A673 (cell line): ENCODE measurements at regions of chr7 and their contacts with region 1.

Region 1: DNA sequence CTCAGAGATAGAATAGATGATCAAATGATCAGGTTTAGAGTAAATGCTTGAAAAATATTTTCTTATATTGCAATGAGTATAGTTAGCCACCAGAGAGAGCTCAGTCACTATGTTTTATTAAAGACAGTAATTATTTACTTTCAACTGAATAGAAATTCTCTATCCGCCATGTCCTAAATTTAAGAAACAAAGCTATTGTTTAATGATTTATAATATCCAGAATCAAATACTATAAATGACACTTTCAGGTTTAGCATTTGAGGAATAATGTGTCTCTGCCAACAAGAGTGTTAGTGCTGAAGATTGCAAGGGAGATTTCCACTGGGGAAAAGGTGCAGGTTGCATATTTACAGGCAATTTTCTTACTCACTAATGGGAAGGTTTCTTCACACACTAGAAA is 184.7 kb downstream of the DGKB start:
- DNase-seq: peak; percentile 27
- H3K4me3 ChIP-seq: no peak overlapping the region
- H3K27ac ChIP-seq: no peak overlapping the region
- H3K4me1 ChIP-seq: no peaks in the 10 kb centered on the region
- H3K27me3 ChIP-seq: peaks cover 21% of the 10 kb centered on the region
- CTCF ChIP-seq: peak; percentile 70

Region 2: GRCh38 chr7:14598978-14599377 is 118.8 kb before region 1 on chr7:
- CTCF ChIA-PET with region 1: no interaction called
- POLR2A ChIA-PET with region 1: no interaction called
- intact Hi-C with region 1: no loop called
- DNase-seq: no peak
- H3K4me3 ChIP-seq: no peak overlapping the region
- H3K27ac ChIP-seq: no peak overlapping the region
- H3K4me1 ChIP-seq: no peaks in the 10 kb centered on the region
- H3K27me3 ChIP-seq: no peaks in the 10 kb centered on the region
- CTCF ChIP-seq: no peak

Region 3: DNA sequence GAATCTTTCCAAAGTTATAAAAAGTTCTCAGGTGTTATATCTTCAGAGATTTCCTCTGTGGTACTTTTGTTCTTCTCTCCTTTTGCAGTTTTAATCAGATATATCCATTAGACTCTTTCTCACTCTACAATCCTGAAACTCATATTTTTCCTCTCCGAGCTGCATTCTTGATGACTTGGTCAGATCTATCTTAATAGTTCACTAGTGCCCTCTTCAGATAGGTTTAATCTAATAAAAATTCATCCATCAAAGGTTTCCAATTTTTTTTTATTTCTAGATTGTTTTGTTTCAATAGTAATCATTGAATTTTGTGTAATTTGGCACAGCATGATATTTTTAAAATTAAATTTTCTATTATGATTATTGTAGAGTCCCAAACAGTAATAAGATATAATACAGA is 206.6 kb after region 1 on chr7:
- CTCF ChIA-PET with region 1: interaction called, 8 read pairs
- POLR2A ChIA-PET with region 1: no interaction called
- intact Hi-C with region 1: loop called (anchors 2 kb)
- DNase-seq: peak; percentile 14
- H3K4me3 ChIP-seq: no peak overlapping the region
- H3K27ac ChIP-seq: no peak overlapping the region
- H3K4me1 ChIP-seq: no peaks in the 10 kb centered on the region
- H3K27me3 ChIP-seq: peaks cover 4% of the 10 kb centered on the region
- CTCF ChIP-seq: no peak; the same call in 1 of the 2 replicates

Region 4: DNA sequence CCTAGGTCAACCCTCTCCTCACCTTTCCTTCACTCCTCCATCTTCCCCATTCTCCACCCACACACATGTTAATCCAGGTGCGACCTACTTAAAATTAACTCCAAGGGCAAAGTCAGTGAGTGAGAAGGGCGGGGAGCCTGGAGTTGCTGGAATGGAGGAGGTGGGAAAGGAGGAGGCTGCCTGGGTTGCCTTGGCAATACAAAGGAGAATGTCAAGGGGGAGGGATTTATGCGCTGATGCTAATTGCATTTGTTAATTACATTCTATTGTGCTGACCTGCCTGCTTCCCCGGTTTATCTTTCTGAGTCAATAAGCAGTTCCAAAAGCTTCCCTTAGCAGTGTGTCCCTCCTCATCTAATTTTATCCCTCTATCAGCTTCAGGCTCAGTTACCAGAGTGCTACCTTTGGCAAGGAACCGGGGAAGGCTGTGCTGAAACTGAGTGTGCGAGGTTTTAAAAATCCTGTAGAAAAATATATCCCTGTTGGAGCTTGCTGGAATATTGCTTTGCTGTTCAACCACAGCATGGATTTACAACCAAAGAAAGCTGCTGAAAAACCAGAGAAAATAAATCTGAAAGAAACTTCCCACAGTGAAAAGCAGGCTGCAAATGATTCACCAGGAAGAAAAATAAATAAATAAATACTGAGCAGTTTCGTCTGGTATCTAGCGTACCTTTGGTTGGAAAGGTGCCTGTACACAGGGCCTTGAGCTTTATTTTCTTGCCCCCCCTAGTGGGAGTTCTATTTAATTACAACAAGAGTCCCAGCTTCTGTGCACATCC is 297.9 kb after region 1 on chr7:
- CTCF ChIA-PET with region 1: interaction called, 17 read pairs
- POLR2A ChIA-PET with region 1: no interaction called
- intact Hi-C with region 1: loop called (anchors 2 kb)
- DNase-seq: peak; percentile 75
- H3K4me3 ChIP-seq: no peak overlapping the region
- H3K27ac ChIP-seq: no peak overlapping the region
- H3K4me1 ChIP-seq: no peaks in the 10 kb centered on the region
- H3K27me3 ChIP-seq: no peaks in the 10 kb centered on the region
- CTCF ChIP-seq: peak; percentile 74

Region 5: DNA sequence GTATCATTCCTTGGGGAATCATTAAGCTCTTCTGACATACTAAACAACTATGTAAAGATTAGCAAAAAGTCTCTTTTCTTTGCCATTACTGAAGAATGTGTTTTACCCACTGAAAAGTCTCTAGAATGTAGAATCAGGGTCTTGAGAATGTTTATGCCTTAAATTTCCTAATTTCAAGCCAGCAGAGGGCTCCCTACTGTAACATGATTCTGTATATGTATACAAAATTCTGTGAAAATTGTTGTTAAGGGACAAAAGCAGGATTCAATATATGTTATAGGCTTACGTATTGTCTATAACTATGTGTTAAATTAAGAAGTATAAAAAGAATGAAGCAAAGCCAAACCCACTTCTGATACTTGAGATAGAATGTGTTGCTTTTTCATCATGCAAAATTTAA is 481.7 kb after region 1 on chr7:
- CTCF ChIA-PET with region 1: no interaction called
- POLR2A ChIA-PET with region 1: no interaction called
- intact Hi-C with region 1: loop called (anchors 10 kb)
- DNase-seq: peak; percentile 22
- H3K4me3 ChIP-seq: no peak overlapping the region
- H3K27ac ChIP-seq: no peak overlapping the region
- H3K4me1 ChIP-seq: peaks cover 9% of the 10 kb centered on the region
- H3K27me3 ChIP-seq: no peaks in the 10 kb centered on the region
- CTCF ChIP-seq: peak; percentile 59

Region 6: GRCh38 chr7:15291702-15292101 is 573.9 kb after region 1 on chr7:
- CTCF ChIA-PET with region 1: no interaction called
- POLR2A ChIA-PET with region 1: no interaction called
- intact Hi-C with region 1: loop called (anchors 10 kb)
- DNase-seq: peak; percentile 12
- H3K4me3 ChIP-seq: no peak overlapping the region
- H3K27ac ChIP-seq: no peak overlapping the region
- H3K4me1 ChIP-seq: no peaks in the 10 kb centered on the region
- H3K27me3 ChIP-seq: peaks cover 8% of the 10 kb centered on the region
- CTCF ChIP-seq: no peak; the same call in 1 of the 2 replicates

Region 7: DNA sequence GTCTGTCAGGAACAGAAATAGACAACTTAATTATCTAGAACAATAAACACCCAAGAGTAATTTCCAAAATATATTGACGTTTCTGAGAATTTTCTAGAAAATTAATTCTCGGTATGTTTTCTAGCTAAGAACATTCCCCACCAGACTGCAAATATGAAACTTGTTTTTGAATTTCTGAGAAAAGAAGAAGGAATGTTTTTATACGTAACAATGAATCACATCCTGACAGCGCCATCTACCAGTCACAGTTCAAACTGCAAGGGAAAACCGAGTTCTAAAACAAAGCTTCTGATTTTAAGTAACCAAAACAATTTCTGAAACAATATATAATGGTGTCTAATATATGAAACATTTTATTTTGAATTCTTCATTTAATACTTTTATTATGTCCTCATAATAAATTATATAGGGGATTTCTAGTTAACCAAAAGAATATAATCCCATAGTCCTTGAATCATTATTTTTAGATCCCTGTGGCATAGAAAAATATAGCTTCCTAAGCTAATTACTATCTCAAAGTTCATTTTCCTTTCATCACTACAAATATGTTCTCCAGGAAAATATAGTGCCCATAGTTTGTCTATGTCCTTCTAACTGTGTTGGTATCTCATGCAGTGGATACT is 1003.1 kb after region 1 on chr7:
- CTCF ChIA-PET with region 1: no interaction called
- POLR2A ChIA-PET with region 1: no interaction called
- intact Hi-C with region 1: loop called (anchors 10 kb)
- DNase-seq: peak; percentile 52
- H3K4me3 ChIP-seq: no peak overlapping the region
- H3K27ac ChIP-seq: no peak overlapping the region
- H3K4me1 ChIP-seq: no peaks in the 10 kb centered on the region
- H3K27me3 ChIP-seq: peaks cover 23% of the 10 kb centered on the region
- CTCF ChIP-seq: peak; percentile 88